BJ (cell line): ENCODE measurements at regions of chr1 and their contacts with region 1.

Region 1: DNA sequence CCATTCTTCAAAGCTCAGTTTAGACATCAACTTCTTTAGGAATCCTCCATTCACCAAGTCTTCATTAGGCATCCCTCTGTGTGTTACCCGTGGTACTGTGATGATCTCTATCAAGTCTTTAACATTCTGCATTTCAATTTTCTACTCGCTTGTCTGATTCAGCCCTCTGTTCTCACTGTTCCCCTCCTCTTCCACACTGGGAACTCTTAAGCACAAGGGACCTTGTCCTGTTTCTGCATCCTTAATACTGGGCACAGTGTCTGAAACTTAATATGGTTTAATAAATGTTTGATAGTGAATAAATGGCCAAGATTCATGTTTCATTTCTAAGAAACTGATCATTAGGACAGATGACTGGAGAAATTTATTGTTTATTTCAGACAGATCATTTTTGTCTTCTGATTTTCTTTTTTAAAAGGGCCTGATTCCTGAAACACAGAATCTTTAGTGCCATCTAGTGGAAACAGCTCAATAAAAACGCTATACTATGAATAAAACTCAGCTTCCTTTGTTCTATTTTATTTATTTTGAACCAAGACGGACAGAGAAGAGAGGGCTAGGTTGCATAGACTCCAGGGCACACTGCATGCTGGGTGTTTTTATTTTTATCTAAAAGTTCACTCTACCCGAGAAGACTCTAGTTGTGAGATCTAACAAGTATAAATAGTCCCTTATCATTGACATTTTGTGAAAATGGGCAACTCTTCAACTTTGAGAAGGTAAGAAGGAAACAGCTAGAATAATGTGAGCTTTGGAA is 7.0 kb upstream of the TRIM45 start:
- DNase-seq: no peak
- H3K4me3 ChIP-seq: no peak overlapping the region
- H3K27me3 ChIP-seq: no peaks in the 10 kb centered on the region
- CTCF ChIP-seq: peak; percentile 65

Region 2: GRCh38 chr1:116962987-116963639 is 165.4 kb before region 1 on chr1:
- CTCF ChIA-PET with region 1: no interaction called
- POLR2A ChIA-PET with region 1: no interaction called
- DNase-seq: no peak
- H3K4me3 ChIP-seq: no peak overlapping the region
- H3K27me3 ChIP-seq: no peaks in the 10 kb centered on the region
- CTCF ChIP-seq: no peak

Region 3: DNA sequence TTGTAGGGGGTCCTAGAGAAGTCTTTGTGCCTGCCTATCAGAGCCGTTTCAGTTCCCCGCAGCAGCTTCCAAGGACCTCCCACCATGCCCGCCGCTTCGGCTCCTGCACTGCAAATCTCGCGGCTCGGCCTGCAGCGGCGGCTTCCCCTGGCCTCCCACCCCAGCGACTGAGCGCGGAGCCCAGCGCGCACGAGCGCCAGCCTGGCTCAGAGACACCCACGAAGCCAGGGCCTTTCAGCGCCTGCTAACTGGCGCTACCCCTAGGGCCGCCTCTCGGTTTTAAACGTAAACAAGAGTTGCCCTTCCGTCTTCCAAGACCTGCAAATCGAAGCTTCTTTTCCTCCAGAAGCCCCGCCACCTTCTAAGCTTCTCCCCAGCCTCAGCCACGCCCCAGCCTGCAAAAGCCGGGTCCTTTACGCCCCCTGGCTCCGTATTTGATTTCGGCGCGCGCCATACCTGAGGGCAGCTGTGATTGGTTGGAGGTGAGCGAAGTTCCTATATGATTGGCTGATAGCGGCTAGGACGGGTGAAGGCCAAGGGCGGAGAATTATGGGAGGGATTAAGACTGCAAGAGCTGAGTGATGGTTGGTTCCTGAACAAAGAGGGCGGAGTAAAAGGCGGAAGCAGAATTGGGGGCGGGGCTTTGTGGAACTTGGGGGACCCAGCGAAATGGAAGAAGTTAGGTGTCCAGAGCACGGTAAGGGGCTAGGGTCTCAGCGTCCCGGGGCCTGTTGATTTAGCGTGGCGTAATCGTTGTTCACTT is 68.6 kb before region 1 on chr1 and contains the start of gene TTF2:
- CTCF ChIA-PET with region 1: interaction called, 185 read pairs
- POLR2A ChIA-PET with region 1: no interaction called
- DNase-seq: peak; percentile 93
- H3K4me3 ChIP-seq: peak within 1 kb of the TSS; percentile 78
- H3K27me3 ChIP-seq: no peaks in the 10 kb centered on the region
- CTCF ChIP-seq: peak; percentile 29; the same call in 1 of the 2 replicates
- polyA plus RNA-seq, gene TTF2: 8.9 and 10.1 TPM in 2 replicates

Region 4: GRCh38 chr1:117067533-117068370 is 60.7 kb before region 1 on chr1:
- CTCF ChIA-PET with region 1: interaction called, 185 read pairs
- POLR2A ChIA-PET with region 1: no interaction called
- DNase-seq: no peak
- H3K4me3 ChIP-seq: no peak overlapping the region
- H3K27me3 ChIP-seq: no peaks in the 10 kb centered on the region
- CTCF ChIP-seq: peak; percentile 76

Region 5: GRCh38 chr1:117077267-117077666 is 51.2 kb before region 1 on chr1:
- CTCF ChIA-PET with region 1: interaction called, 185 read pairs
- POLR2A ChIA-PET with region 1: no interaction called
- DNase-seq: no peak
- H3K4me3 ChIP-seq: no peak overlapping the region
- H3K27me3 ChIP-seq: no peaks in the 10 kb centered on the region
- CTCF ChIP-seq: no peak

Region 6: DNA sequence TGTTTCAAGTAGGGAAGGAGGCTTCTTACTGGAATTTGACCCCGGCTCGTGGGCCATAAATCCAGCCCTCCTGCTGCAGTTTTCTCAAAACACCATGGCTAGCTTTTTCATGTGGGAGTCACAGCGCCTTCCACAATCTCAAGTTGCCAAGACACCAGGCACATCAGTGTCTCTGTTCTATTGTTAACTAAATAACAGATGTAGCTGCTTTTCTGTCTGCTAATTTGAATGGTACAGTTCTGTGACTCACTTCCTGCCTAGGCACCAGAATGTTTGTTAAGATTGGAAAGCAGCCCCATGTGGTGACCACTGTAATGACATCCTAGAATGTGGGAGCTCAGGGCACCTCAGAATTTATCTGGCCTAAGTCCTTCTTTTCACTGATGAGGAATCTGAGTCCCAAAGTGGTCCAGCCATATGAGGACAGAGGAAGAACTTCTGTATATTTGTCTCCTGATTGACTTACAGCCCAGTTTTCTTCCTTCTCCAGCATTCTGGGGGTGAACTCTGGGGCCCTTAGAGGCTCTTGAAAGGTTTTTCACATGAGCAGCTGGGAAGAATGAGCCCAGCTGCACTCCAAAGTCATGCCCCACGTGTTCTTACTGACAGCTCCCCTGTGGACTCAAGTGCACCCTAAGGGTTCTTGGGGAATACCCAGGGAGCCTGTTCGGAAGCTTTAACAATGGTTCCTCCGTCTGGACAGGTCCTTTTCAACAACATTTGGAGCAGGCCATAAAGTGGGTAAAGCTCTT is 34.5 kb before region 1 on chr1:
- CTCF ChIA-PET with region 1: interaction called, 27 read pairs
- POLR2A ChIA-PET with region 1: interaction called, 5 read pairs
- DNase-seq: no peak
- H3K4me3 ChIP-seq: no peak overlapping the region
- H3K27me3 ChIP-seq: no peaks in the 10 kb centered on the region
- CTCF ChIP-seq: peak; percentile 37

Region 7: DNA sequence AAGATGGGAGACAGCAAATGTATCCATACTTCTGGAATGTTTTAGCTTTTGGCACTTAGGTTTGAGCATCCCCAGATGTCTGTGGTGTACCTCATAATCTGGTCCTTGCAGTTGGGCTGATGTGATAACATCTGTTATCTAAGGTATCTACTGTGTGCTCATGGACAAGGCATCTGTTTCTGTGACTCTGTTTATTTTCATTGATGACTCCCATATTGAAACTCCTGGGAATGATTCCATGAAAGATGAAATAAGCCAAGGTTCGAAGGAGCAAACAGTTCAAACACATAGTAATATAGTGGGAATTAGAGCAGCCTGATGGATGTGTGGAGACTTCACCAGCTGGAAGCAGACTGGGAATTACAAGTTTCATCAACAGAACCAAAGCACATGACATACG is 13.7 kb after region 1 on chr1:
- CTCF ChIA-PET with region 1: interaction called, 14 read pairs
- POLR2A ChIA-PET with region 1: no interaction called
- DNase-seq: peak; percentile 75
- H3K4me3 ChIP-seq: no peak overlapping the region
- H3K27me3 ChIP-seq: no peaks in the 10 kb centered on the region
- CTCF ChIP-seq: no peak

Region 8: DNA sequence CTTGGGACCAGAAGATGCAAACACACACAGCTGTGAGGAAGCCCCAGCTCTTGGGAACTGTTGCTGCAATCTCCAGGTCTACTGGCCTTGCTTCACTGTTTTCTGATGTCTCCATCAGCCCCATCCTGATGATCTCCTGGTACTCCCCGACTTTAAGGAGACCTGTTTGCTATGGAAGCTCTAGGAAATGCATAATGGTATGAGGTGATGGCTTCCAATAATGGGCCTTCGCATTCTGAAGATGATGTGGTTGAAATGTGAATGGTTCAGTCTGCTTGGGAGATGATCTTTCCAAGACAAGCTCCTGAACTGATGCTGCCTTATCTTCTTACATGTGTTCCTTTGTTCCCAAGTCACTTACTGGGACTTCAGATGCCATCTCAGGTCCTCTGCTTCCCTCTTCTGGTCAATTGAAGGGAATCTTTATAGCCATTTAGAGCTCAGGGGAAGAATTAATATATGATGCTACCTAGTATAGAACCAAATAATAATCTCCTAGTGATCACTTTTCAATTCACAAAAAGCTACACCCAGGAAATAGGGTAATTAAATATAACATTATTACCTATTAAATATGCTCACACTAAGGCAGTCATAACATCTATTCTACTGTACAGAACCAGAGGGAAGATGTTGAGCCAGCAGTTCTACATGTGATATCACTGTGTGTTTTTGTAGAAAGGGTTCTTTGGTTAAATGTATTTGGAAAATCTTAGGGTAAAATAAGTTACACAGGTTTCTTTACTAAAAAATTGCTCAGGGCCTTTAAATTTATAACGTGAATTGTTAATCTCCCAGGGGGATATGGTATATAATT is 156.1 kb after region 1 on chr1:
- CTCF ChIA-PET with region 1: interaction called, 29 read pairs
- POLR2A ChIA-PET with region 1: no interaction called
- DNase-seq: peak; percentile 26
- H3K4me3 ChIP-seq: no peak overlapping the region
- H3K27me3 ChIP-seq: no peaks in the 10 kb centered on the region
- CTCF ChIP-seq: peak; percentile 64

Region 9: DNA sequence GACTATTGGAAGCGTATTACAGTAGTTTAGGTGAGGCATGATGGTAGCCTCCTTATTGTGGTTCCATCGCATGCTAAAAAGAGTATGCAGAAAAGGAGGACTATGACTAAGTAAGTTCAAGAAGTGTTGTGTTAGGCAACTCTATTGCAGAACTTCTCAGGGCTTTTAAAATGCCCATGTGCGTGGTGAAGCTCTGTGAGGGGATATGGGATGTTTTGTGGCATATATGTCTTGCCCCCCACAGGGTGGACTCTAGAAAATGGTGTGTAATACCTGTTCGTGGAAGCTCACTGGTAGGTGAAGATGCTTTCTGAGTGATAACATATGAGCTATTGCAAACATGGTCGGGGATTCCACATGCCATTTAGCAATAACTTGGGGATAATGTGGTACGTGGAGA is 270.5 kb after region 1 on chr1:
- CTCF ChIA-PET with region 1: no interaction called
- POLR2A ChIA-PET with region 1: no interaction called
- DNase-seq: no peak
- H3K4me3 ChIP-seq: no peak overlapping the region
- H3K27me3 ChIP-seq: no peaks in the 10 kb centered on the region
- CTCF ChIP-seq: no peak